ENCODE measurements at regions of chr17 and their contacts with region 1.

Region 1: DNA sequence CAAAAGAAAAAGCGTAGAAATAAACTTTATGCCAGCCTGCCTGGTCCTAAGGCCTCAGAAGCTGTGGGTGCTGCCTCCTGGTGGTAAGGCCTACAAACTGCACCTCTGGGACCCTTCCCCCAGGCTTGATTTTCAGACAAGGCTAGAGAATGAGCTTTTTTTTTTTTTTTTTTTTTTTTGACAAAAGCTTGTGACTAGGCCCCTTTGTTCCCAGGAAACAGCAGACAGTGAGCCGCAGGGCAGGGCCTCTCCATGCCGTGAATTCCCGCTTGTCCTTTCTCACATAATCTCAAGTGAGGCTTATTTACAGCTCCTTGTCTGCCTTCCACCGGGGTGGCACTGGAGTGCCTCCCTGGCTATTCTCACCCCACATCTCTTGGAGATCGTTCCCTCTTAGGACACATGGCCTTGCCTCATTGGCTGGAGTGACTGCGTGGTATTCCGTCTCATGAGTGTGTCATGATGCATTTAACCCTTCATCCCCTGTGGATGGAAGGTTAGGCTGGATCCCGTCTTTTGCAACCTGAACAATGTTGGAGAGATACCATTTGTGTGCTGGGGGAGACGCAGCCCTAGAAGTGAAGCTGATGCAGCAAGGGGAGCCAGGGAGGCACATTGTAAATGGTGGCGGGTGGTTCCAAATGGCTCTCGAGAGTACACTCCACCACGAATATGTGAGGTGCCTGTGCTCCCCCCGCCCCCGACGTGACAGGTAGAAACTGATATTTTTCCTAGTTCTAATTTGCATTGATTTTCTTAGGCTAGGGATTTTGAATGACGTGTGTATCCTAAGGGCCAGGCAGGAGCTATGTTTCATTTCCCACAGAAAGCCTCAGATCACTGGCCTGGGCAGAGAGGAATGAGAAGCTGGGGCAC is 49.6 kb downstream of the USP22 start:
- DNase-seq: peak; percentile 70
- H3K4me3 ChIP-seq: no peak overlapping the region
- H3K27ac ChIP-seq: no peak overlapping the region
- H3K4me1 ChIP-seq: no peaks in the 10 kb centered on the region
- H3K27me3 ChIP-seq: no peaks in the 10 kb centered on the region

Region 2: DNA sequence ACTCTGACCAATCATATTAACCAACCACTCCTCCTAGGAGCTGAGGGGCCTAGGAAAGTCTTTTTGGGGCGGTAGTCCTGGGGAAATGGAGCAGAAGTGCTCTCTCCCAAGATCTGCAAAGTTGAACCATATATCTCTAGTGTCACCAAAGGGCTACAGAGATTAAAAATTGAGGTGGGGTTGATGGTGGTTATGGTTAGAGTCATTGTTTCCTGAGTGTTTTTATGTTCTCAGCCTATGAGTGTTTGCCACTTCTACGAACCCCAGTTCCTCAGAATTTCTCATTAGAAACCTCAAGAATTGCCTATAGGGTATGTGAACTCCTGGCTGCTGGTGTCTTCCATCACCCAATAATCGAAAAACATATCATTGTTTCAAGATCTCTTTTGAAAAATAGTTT is 195.9 kb before region 1 on chr17:
- in situ Hi-C with region 1: loop called (anchors 10 kb)
- DNase-seq: no peak
- H3K4me3 ChIP-seq: no peak overlapping the region
- H3K27ac ChIP-seq: no peak overlapping the region
- H3K4me1 ChIP-seq: no peaks in the 10 kb centered on the region
- H3K27me3 ChIP-seq: no peaks in the 10 kb centered on the region

Measured in GM23248 (cell line).